ENCODE measurements at regions of chr9 and their contacts with region 1.

Region 1: GRCh38 chr9:126228781-126229444 is 97.7 kb upstream of the MVB12B start:
- DNase-seq: peak; percentile 84
- ATAC-seq: peak; percentile 99
- H3K4me3 Mint-ChIP-seq: no peak overlapping the region
- H3K27ac Mint-ChIP-seq: no peak overlapping the region
- H3K4me1 Mint-ChIP-seq: no peaks in the 10 kb centered on the region
- H3K27me3 Mint-ChIP-seq: peaks cover 29% of the 10 kb centered on the region

Region 2: DNA sequence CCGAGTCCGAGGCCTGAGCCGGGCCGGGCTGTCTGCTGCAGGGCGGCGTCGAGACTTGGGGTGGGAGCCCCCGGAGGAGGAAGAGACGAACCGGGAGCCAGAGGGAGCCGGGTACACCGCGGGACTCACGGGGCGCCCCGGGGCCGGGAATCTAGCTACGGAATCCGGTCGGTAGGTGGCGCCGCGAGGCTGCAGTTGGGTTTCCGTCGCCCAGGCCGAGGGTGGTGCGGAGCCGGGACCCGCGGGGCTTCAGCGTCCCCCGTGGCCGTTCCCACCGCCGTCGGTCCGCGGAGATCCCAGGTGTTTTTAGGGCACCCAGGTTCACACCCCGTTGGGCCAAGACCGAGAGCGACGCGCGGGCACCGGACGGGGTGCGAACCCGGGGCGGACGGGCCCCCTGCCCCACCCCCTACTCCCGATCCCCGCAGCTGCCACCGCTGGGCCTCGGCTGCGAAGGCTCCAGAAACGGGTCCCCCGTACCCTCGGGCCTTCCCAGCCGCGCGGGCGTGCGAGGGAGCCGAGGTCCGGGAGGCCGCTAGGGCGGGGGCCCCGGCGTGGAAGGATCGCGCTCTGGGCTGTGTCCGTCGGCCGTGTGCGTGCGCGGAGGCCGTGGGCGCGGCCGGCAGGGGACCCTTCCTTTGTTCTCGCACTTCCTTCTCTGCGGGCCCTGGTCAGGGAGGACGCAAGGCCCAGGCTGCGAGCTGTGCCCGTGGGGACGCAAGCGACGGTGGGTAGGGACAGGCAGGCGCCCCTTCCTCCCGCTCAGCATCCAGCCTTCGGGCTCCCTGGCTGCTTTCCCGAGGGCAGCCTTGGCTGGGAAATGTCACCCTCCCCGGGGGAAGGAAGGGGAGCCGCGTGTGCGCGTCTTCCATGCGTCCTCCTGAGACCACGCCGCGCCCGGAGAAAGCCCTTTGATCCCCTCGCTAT is 820.7 kb before region 1 on chr9:
- CTCF ChIA-PET with region 1: interaction called, 8 read pairs
- POLR2A ChIA-PET with region 1: no interaction called
- intact Hi-C with region 1: loop called (anchors 1 kb)
- DNase-seq: peak; percentile 89
- ATAC-seq: peak; percentile 76
- H3K4me3 Mint-ChIP-seq: peak overlapping the region; percentile 62
- H3K27ac Mint-ChIP-seq: no peak overlapping the region
- H3K4me1 Mint-ChIP-seq: peaks cover 13% of the 10 kb centered on the region
- H3K27me3 Mint-ChIP-seq: peaks cover 27% of the 10 kb centered on the region

Region 3: DNA sequence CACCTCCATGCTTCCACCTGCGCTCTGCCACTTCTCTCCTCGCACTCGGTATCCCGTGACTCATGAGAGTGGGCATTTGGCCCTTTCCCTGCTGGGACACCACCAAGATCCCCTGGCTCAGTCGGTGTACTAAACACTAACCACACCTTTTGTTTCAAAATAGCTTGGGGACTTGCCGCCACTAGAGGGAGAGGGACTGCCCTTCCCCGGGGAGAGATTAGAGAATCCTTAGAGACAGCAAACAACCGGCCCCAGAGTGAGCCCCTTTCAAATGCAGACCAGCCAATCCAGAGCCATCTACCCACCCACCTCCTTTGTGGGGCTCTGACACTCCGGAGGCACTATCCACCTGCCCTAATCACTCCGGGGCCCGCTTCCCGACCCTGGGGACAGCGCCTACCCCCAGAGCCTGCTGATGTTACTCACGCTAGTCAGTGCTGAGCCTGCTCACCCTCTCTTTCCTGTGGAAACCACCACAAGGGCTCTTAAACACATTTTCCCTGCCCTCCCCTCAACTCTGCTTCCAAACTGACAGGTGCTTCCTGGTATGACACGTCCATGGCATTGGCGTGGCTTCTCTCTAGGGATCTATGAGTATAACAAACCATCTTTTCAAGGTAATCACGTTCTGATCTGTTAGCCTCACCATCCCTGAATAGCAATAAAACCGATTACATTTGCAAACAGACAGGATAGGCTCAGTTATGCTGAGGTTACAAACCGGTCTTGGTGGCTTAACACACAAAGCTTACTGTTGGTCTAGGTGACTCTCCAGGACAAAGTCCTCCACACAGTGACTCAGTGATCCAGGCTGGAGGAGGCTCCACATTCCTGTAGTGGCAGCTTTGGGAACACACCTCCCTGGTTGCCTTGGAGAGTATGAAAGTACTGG is 82.4 kb before region 1 on chr9:
- CTCF ChIA-PET with region 1: no interaction called
- POLR2A ChIA-PET with region 1: no interaction called
- intact Hi-C with region 1: loop called in 1 of 2 experiments (anchors 1 kb)
- DNase-seq: peak; percentile 55
- ATAC-seq: peak; percentile 85
- H3K4me3 Mint-ChIP-seq: no peak overlapping the region
- H3K27ac Mint-ChIP-seq: no peak overlapping the region
- H3K4me1 Mint-ChIP-seq: peaks cover 8% of the 10 kb centered on the region
- H3K27me3 Mint-ChIP-seq: peaks cover 32% of the 10 kb centered on the region

Region 4: GRCh38 chr9:126198854-126199253 is 30.1 kb before region 1 on chr9:
- CTCF ChIA-PET with region 1: no interaction called
- POLR2A ChIA-PET with region 1: no interaction called
- intact Hi-C with region 1: no loop called
- DNase-seq: no peak
- ATAC-seq: no peak
- H3K4me3 Mint-ChIP-seq: no peak overlapping the region
- H3K27ac Mint-ChIP-seq: no peak overlapping the region
- H3K4me1 Mint-ChIP-seq: no peaks in the 10 kb centered on the region
- H3K27me3 Mint-ChIP-seq: peaks cover 26% of the 10 kb centered on the region

Measured in activated CD4-positive, alpha-beta T cell treated with anti-CD3 and anti-CD28 coated beads for 36 hours (primary cell).